HepG2 (cell line): ENCODE measurements at regions of chr15 and their contacts with region 1.

Region 1: GRCh38 chr15:69160141-69160993 is at the start of gene GLCE:
- DNase-seq: peak; percentile 90
- ATAC-seq: peak; percentile 94
- H3K4me3 ChIP-seq: peak within 1 kb of the TSS; percentile 93 to 97 (median 94)
- H3K27ac ChIP-seq: peak within 1 kb of the TSS; percentile 81
- H3K4me1 ChIP-seq: peaks cover 31% of the 10 kb centered on the region
- H3K27me3 ChIP-seq: peaks cover 0 to 3% of the 10 kb centered on the region in 2 experiments; a peak in 3 of 5 replicates
- CTCF ChIP-seq: peak; percentile 21; the same call in 1 of the 2 replicates
- EP300 ChIP-seq: no peak
- POLR2A ChIP-seq: peak; percentile 93 to 94
- RAD21 ChIP-seq: peak; percentile 48; the same call in 1 of the 2 replicates
- total RNA-seq, gene GLCE: 11.0 and 12.9 TPM in 2 replicates

Region 2: DNA sequence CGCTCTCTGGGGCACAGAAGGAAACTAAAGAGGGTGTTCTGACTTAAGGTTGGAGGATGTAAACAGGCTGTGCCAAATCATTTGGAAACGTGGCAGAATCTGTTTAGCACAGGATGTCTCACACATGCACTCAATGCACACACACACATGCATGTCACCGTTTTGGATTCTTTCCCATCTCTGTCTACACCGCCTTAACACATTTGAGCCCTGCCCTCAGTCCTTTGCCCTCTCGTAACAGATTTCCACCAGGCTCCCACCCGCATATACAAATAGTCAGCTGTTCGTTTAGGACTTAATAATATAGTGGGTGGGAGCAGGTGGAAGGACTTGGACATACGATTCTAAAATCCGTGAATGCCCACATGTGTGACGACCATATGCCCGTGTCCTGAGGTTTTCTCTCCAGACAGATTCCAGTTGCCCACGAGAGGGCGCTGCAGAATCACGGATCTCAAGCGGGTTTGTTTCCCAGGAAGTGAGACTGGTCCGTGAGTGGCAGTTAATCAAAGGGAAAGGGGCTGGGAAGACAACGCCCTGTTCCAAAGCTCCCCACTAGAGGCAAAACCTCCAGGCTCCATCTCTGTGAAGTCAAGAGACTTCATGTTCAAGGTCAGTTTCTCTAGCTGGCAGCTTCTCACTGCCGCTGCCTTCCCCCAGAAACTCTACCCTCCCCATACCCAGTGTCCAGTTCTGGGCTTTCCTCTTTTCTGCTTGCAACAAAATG is 101.4 kb before region 1 on chr15:
- CTCF ChIA-PET with region 1: no interaction called
- POLR2A ChIA-PET with region 1: no interaction called
- in situ Hi-C with region 1: loop called (anchors 5 kb)
- intact Hi-C with region 1: loop called (anchors 1 kb)
- DNase-seq: peak; percentile 83
- ATAC-seq: peak; percentile 87
- H3K4me3 ChIP-seq: peak overlapping the region in 1 of 3 experiments; percentile 39; a peak in 2 of 6 replicates
- H3K27ac ChIP-seq: no peak overlapping the region
- H3K4me1 ChIP-seq: peaks cover 34% of the 10 kb centered on the region
- H3K27me3 ChIP-seq: peaks cover 0 to 20% of the 10 kb centered on the region in 2 experiments; a peak in 2 of 5 replicates
- CTCF ChIP-seq: peak; percentile 96
- EP300 ChIP-seq: no peak
- POLR2A ChIP-seq: no peak
- RAD21 ChIP-seq: peak; percentile 91

Region 3: DNA sequence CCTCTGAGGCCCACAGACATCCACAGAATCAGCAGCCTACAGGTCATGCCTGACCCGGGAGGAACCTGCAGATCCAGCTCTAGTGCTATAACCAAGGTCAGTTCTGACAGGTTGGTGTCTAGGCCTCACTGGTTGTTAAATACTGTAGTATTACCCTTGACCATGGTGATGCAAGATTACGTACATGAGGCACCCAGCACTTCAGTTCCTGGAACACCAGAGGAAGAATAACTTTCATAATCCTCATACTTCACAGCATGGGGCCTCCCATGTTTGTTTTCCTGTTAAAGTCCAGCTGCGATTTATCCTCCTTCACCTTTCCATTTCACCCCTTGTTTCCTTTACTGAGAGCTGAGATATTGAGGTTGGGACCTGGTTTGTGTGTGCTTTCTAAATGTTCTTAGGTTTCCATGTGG is 34.3 kb before region 1 on chr15:
- CTCF ChIA-PET with region 1: no interaction called
- POLR2A ChIA-PET with region 1: interaction called, 29 read pairs
- in situ Hi-C with region 1: no loop called
- intact Hi-C with region 1: no loop called
- DNase-seq: peak; percentile 80
- ATAC-seq: peak; percentile 89
- H3K4me3 ChIP-seq: peak overlapping the region in 1 of 3 experiments; percentile 16; a peak in 1 of 6 replicates
- H3K27ac ChIP-seq: no peak overlapping the region
- H3K4me1 ChIP-seq: peaks cover 51% of the 10 kb centered on the region
- H3K27me3 ChIP-seq: peaks cover 1 to 12% of the 10 kb centered on the region in 2 experiments; a peak in 1 of 5 replicates
- CTCF ChIP-seq: no peak
- EP300 ChIP-seq: peak; percentile 30 to 76; a peak in 3 of 4 replicates
- POLR2A ChIP-seq: no peak
- RAD21 ChIP-seq: no peak

Region 4: DNA sequence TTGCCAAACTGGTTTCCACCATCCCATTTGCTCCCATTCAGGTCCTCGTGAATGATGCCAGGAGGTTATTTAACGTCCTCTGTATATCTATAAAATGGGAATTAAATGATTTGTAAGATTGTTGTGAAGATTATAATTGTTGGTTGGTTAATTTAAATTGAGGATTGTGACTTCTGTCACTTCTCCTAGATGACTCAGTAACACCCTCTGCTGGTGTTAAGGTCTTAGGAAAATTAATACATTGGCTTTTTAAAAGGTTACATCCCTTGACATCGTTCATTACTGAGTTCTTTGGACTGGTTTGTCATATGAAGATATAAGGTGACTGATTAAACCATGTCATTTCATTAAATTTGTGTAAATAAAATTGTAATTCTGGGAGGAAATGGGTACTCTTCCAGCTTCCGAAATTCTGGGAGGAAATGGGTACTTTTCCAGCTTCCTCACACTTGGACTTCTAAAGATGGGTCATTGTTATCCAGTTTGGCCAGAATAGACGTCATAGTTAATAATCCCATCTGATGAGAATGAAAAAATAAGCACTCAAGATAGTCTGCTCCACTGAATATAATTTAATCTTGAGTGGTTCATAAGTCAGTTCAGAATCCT is 105.1 kb after region 1 on chr15:
- CTCF ChIA-PET with region 1: no interaction called
- POLR2A ChIA-PET with region 1: no interaction called
- in situ Hi-C with region 1: no loop called
- intact Hi-C with region 1: loop called (anchors 5 kb)
- DNase-seq: peak; percentile 47
- ATAC-seq: no peak
- H3K4me3 ChIP-seq: no peak overlapping the region
- H3K27ac ChIP-seq: no peak overlapping the region
- H3K4me1 ChIP-seq: no peaks in the 10 kb centered on the region
- H3K27me3 ChIP-seq: no peaks in the 10 kb centered on the region
- CTCF ChIP-seq: peak; percentile 46
- EP300 ChIP-seq: no peak
- POLR2A ChIP-seq: no peak
- RAD21 ChIP-seq: 0 out of 2 replicates have a peak, but pooled peaks have one; percentile 21

Region 5: DNA sequence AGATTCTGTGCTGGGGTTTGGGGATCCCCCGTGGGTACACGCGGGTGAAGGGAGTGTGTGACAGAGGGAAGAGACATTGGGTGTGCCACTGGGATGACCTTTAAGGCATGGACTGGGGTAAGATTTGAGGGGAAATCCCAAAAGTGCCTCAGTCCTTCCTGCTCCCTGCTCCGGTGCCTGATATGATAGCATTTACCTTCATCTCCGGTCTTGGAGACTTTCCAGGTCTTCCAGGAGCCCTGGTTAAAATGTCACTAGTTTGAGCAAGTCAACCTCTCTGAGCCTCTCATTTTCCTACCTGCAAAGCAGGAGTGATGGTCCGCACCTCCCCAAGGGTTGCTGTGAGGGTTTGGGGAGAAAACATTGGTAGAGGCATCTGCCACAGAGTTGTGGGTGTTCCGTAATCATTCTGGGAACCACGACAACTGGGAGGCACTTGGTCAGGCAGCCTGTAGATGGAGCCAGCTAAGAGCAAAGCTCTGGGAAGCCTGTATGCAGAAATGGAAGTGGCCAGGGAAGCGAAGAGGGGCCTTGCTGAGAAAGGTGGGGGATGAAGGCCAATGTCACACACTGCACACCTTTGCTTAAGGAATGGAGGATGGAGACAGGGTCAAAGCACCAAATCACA is 219.8 kb after region 1 on chr15:
- CTCF ChIA-PET with region 1: no interaction called
- POLR2A ChIA-PET with region 1: no interaction called
- in situ Hi-C with region 1: no loop called
- intact Hi-C with region 1: no loop called
- DNase-seq: peak; percentile 11
- ATAC-seq: peak; percentile 86
- H3K4me3 ChIP-seq: no peak overlapping the region
- H3K27ac ChIP-seq: no peak overlapping the region
- H3K4me1 ChIP-seq: peaks cover 10% of the 10 kb centered on the region; the same call in 1 of the 2 replicates
- H3K27me3 ChIP-seq: peaks cover 0 to 5% of the 10 kb centered on the region in 2 experiments; a peak in 3 of 5 replicates
- CTCF ChIP-seq: peak; percentile 40
- EP300 ChIP-seq: no peak
- POLR2A ChIP-seq: no peak
- RAD21 ChIP-seq: no peak

Region 6: GRCh38 chr15:69452692-69453521 is 292.5 kb after region 1 on chr15 and contains the start of gene RPLP1:
- CTCF ChIA-PET with region 1: no interaction called
- POLR2A ChIA-PET with region 1: interaction called, 16 read pairs
- in situ Hi-C with region 1: no loop called
- intact Hi-C with region 1: no loop called
- DNase-seq: peak; percentile 92
- ATAC-seq: peak; percentile 88
- H3K4me3 ChIP-seq: peak within 1 kb of the TSS; percentile 79 to 92 (median 89)
- H3K27ac ChIP-seq: peak within 1 kb of the TSS; percentile 98
- H3K4me1 ChIP-seq: peaks cover 27% of the 10 kb centered on the region
- H3K27me3 ChIP-seq: no peaks in the 10 kb centered on the region; a peak in 1 of 5 replicates
- CTCF ChIP-seq: no peak
- EP300 ChIP-seq: no peak
- POLR2A ChIP-seq: peak; percentile 99 to 100
- RAD21 ChIP-seq: no peak
- total RNA-seq, gene RPLP1: 797 and 817 TPM in 2 replicates